IMR-90 (cell line): ENCODE measurements at regions of chr3 and their contacts with region 1.

Region 1: DNA sequence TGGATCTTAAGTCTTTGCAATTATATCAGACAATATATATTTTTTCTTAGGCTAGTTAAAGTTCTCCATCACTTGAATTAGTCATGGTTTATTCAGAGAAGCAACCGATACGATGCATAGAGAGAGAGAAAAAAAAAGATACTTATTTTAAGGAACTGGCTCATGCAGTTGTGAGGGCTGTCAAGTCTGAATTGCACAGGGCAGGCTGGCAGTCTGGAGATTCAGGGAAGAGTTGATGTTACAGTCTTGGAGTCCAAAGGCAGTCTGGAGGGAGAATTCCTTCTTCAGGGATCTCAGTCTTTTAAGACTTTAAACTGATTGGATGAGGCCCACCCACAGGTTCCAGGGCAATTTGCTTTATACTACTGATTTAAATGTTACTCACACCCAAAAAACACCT is 412.6 kb downstream of the IL5RA start:
- DNase-seq: no peak
- ATAC-seq: no peak
- H3K4me3 ChIP-seq: no peak overlapping the region
- H3K27ac ChIP-seq: no peak overlapping the region
- H3K4me1 ChIP-seq: no peaks in the 10 kb centered on the region
- H3K27me3 ChIP-seq: no peaks in the 10 kb centered on the region
- CTCF ChIP-seq: no peak
- POLR2A ChIP-seq: no peak
- RAD21 ChIP-seq: no peak

Region 2: DNA sequence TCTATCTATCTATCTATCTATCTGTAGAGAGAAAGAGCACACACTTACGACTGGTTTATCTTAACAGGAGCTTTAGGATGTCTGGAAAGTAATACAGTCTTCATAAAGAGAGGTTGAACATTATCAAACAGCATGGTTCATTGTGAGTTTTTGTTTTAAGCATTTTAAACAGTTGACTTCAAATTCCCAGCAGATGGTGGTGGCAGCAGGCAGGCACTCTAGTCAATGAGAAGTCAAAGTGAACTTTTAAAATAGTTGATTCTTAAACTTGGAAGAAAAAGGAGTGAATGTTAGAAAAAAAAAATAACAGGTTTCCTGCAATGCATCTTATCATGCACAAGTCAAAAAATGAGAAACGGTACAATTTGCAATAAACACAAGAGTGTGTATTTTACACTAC is 20.1 kb before region 1 on chr3:
- CTCF ChIA-PET with region 1: no interaction called
- POLR2A ChIA-PET with region 1: no interaction called
- dilution Hi-C with region 1: no loop called
- in situ Hi-C with region 1: no loop called
- intact Hi-C with region 1: loop called (anchors 2 kb)
- DNase-seq: no peak
- ATAC-seq: no peak
- H3K4me3 ChIP-seq: no peak overlapping the region
- H3K27ac ChIP-seq: no peak overlapping the region
- H3K4me1 ChIP-seq: no peaks in the 10 kb centered on the region
- H3K27me3 ChIP-seq: no peaks in the 10 kb centered on the region
- CTCF ChIP-seq: no peak
- POLR2A ChIP-seq: no peak
- RAD21 ChIP-seq: no peak